Gastrocnemius medialis (tissue), 4 donors: ENCODE measurements at regions of chr1 and their contacts with region 1.

Region 1: DNA sequence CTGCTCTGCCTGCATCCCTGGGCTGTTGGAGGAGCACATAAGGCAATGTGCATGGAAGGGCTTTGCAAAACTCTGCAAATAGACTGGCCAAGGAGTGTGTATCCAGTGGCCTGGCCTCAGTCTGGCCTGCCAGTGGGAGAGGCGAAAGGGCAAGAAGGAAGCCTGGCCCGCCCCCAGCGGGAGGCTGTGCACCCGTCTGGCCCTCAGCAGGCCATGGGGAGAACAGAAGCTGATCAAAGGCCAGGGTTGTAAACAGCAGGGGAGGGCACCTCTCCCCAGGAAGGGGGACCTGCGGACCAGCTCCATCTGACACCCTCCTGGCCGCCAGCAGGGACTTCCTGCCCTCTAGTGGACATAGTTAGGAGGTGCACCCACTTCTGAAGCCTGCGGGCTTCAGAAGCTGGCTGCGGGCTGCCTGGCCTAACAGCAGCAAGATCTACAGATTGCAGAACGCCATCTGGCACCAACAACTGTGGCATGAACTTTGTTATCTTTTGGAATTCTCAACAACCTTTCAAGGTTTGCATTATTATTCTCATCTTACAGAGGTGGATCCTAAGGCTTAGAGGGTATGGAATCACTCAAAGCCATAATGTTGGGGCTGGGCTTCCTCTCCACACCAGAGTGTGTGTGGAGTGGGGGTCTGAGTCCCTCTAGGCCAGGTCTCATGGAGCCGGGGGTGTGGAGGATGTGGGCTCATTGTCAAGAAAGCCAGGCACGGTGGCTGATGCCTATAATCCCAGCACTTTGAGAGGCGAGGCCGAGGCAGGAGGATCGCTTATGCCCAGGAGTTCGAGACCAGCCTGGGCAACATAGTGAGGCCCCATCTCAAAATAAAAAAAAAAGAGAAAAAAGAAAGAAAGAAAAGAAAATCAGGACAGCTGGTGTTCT is 18.9 kb upstream of the CDK18 start:
- DNase-seq: peak in 1 of 2 donors; percentile 36
- ATAC-seq: peak; percentile 73 to 81
- H3K4me3 ChIP-seq: no peak overlapping the region
- H3K27ac ChIP-seq: no peak overlapping the region
- H3K4me1 ChIP-seq: no peaks in the 10 kb centered on the region
- H3K27me3 ChIP-seq: peaks cover 15 to 32% (median 23%) of the 10 kb centered on the region in 3 donors
- CTCF ChIP-seq: peak; percentile 78 to 97 (median 86)
- POLR2A ChIP-seq: no peak

Region 2: GRCh38 chr1:205354259-205354904 is 131.2 kb before region 1 on chr1:
- in situ Hi-C with region 1: loop called in 2 of 4 experiments (anchors 10 kb)
- intact Hi-C with region 1: loop called (anchors 10 kb)
- DNase-seq: no peak
- ATAC-seq: peak in 1 of 2 donors; percentile 58
- H3K4me3 ChIP-seq: no peak overlapping the region
- H3K27ac ChIP-seq: no peak overlapping the region
- H3K4me1 ChIP-seq: no peaks in the 10 kb centered on the region
- H3K27me3 ChIP-seq: peaks cover 2 to 12% (median 7%) of the 10 kb centered on the region in 3 donors
- CTCF ChIP-seq: peak; percentile 51 to 76 (median 68)
- POLR2A ChIP-seq: no peak

Region 3: DNA sequence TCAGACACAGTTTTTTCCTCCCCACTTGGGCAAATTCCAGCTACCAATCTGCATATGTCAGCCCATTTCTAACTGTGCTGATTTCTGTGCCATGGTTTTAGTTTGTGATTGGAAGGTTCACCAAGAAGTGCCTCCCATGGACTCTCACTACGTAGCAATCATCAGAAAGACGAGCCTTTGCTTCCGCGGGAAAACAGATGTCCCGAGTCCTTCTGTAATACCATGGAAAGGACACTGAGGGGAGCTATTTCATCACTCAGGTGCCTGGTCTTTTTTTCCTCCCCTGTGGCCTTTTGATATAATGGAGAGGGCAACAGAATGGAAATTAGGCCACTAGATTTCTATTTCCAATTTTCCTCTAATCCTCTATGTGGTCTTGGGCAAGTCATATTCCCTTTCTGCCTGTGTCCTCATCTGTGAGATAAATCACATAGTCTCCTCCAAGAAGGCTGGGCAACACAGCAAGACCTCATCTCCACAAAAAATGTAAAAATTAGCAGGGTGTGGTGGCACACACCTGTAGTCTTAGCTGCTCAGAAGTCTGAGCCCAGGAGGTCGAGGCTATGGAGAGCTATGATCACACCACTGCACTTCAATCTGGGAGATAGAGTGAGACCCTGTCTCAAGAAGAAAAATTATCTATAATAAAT is 88.5 kb before region 1 on chr1:
- in situ Hi-C with region 1: loop called in 2 of 4 experiments (anchors 5 to 10 kb)
- intact Hi-C with region 1: no loop called
- DNase-seq: no peak
- ATAC-seq: peak; percentile 83 to 85
- H3K4me3 ChIP-seq: no peak overlapping the region
- H3K27ac ChIP-seq: no peak overlapping the region
- H3K4me1 ChIP-seq: no peaks in the 10 kb centered on the region
- H3K27me3 ChIP-seq: no peaks in the 10 kb centered on the region
- CTCF ChIP-seq: peak; percentile 49 to 73 (median 71)
- POLR2A ChIP-seq: no peak

Region 4: GRCh38 chr1:205543411-205544301 is 58.1 kb after region 1 on chr1:
- in situ Hi-C with region 1: no loop called
- intact Hi-C with region 1: no loop called
- DNase-seq: peak in 1 of 2 donors; percentile 26
- ATAC-seq: peak; percentile 69 to 81
- H3K4me3 ChIP-seq: peak overlapping the region; percentile 2 to 31 (median 20)
- H3K27ac ChIP-seq: peak overlapping the region; percentile 57 to 79 (median 76)
- H3K4me1 ChIP-seq: no peaks in the 10 kb centered on the region
- H3K27me3 ChIP-seq: peaks cover 25 to 36% (median 26%) of the 10 kb centered on the region in 3 donors
- CTCF ChIP-seq: no peak
- POLR2A ChIP-seq: no peak